Activated T-helper 2 cell treated with anti-CD3 and anti-CD28 coated beads, Interferon-gamma antibody, Interleukin-2, Interleukin-4, amounts not matched to agents 10 μg/mL and 5 μg/mL and 100 μg/mL, durations not matched to agents 14 hours and 24 hours and 36 hours (primary cell): ENCODE measurements at regions of chr2 and their contacts with region 1.

Region 1: DNA sequence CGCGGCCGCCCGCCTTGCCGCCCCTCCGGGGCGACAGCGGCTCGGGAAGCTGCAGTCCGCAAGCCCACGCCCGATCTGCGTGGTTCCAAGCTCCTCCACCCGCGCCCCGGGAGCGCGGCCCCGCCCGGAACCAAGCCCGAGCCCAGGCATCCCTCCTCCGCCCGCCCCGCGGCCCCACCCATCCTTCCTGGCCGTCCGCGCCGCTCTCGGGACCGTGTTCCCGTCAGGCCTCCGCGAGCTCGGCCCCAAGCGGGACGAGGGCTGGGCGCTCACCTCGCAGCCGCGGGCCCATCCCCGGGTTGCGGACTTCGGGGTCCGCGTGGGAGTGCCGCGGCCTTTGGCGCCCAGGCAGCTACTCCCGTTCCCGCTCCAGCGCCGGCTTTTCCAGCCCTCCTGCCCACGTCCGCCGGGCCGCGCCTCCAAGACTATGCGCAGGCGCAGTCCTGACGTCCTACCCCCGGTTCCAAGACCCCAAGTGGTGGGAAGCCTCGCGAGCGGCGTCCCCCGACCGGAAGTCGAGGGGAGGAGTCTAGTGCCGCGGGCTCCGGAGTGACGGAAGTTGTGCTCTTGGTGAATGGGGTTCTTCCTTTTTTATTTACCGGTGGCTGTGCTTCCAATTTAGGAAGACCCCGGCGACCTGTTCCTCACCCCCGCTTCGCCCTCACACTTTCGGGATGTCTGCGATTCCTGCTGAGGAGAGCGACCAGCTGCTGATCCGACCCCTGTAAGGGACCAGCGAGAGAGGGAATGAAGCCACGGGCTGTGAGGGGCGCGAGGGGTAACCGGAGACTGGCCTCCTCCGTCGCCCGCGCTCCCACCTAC is at the starts of genes CPSF3 and ITGB1BP1:
- DNase-seq: peak; percentile 97
- H3K4me3 Mint-ChIP-seq: peak within 1 kb of the TSS; percentile 91
- H3K27ac Mint-ChIP-seq: peak within 1 kb of the TSS; percentile 93
- H3K4me1 Mint-ChIP-seq: peaks cover 31% of the 10 kb centered on the region
- H3K27me3 Mint-ChIP-seq: no peaks in the 10 kb centered on the region
- total RNA-seq, gene CPSF3: 69.5 and 73.2 TPM in 2 replicates
- total RNA-seq, gene ITGB1BP1: 118 and 128 TPM in 2 replicates

Region 2: DNA sequence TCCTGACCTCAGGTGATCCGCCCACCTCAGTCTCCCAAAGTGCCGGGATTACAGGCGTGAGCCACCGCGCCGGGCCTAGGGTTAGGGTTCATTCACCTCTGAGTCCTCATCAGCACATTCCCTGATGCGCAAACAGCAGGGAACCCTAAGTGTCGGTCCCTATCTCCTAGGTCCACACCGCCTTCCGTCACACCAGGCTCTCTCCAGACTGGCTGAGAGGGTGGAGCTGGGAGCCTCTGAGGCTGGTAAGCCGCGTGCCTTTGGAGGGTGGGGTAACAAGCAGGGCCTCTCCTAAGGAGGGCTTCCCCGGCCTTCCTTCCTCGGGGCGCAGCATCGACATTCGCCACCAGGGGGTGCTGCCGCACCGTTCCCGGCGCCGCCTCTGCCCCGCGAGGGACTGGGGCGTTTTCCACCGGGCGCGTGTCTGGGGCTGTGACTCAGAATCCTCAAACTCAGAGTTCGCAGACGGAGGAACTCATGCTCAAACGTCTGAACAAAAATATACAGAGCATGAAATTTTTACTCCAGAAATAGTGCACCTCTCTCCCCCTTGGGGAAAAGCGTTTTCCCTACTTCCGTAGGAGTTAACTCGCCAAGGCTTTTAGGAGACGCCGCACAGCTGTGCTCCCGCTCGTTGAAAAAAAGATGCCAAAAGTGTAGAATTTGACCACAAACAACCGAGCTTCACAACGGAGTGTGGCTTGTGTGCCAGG is 280.6 kb before region 1 on chr2:
- intact Hi-C with region 1: loop called (anchors 10 kb)
- DNase-seq: peak; percentile 68
- H3K4me3 Mint-ChIP-seq: peak overlapping the region; percentile 4
- H3K27ac Mint-ChIP-seq: no peak overlapping the region
- H3K4me1 Mint-ChIP-seq: peaks cover 1% of the 10 kb centered on the region
- H3K27me3 Mint-ChIP-seq: peaks cover 19% of the 10 kb centered on the region

Region 3: GRCh38 chr2:9205963-9206948 is 217.1 kb before region 1 on chr2 and contains the start of gene ASAP2:
- intact Hi-C with region 1: loop called (anchors 5 kb)
- DNase-seq: peak; percentile 40
- H3K4me3 Mint-ChIP-seq: peak within 1 kb of the TSS; percentile 72
- H3K27ac Mint-ChIP-seq: no peak within 1 kb of the TSS
- H3K4me1 Mint-ChIP-seq: peaks cover 3% of the 10 kb centered on the region
- H3K27me3 Mint-ChIP-seq: peaks cover 54% of the 10 kb centered on the region
- total RNA-seq, gene ASAP2: 0.74 and 0.96 TPM in 2 replicates

Region 4: GRCh38 chr2:9474361-9474967 is 51.2 kb after region 1 on chr2 and contains the start of gene IAH1:
- intact Hi-C with region 1: loop called (anchors 1 kb)
- DNase-seq: peak; percentile 61
- H3K4me3 Mint-ChIP-seq: peak within 1 kb of the TSS; percentile 74
- H3K27ac Mint-ChIP-seq: peak within 1 kb of the TSS; percentile 69
- H3K4me1 Mint-ChIP-seq: peaks cover 30% of the 10 kb centered on the region
- H3K27me3 Mint-ChIP-seq: no peaks in the 10 kb centered on the region
- total RNA-seq, gene IAH1: 82.0 and 82.4 TPM in 2 replicates

Region 5: DNA sequence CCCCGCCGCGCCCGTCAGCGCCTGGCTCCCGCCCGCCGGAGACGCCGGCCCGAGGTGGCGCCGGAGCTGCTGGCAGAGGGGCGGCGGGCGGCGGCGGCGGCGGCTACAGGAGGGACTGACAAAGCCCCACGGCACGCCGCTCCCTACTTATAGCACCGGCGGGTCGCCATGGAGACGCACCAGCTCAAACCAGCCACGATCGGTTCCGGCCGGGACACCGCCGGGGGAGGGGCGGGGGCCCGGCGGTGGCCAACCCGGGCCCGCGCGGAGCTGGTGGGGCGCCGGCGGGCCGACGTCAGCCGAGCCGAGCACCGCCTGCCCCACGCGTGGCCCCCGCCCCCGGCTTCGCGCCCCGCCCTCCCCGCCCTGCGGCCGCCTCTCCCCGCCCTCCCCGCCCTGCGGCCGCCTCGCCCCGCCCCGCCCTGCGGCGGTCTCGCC is 1024.9 kb after region 1 on chr2 and contains the start of gene ODC1:
- intact Hi-C with region 1: loop called (anchors 5 kb)
- DNase-seq: peak; percentile 91
- H3K4me3 Mint-ChIP-seq: peak within 1 kb of the TSS; percentile 94
- H3K27ac Mint-ChIP-seq: peak within 1 kb of the TSS; percentile 92
- H3K4me1 Mint-ChIP-seq: peaks cover 36% of the 10 kb centered on the region
- H3K27me3 Mint-ChIP-seq: no peaks in the 10 kb centered on the region
- total RNA-seq, gene ODC1: 161 and 164 TPM in 2 replicates